Panc1 (cell line): ENCODE measurements at regions of chr5 and their contacts with region 1.

Region 1: GRCh38 chr5:172006321-172007174 is at the start of gene FBXW11:
- DNase-seq: peak; percentile 86
- ATAC-seq: peak; percentile 93
- H3K4me3 ChIP-seq: peak within 1 kb of the TSS; percentile 99 to 100
- H3K27ac ChIP-seq: peak within 1 kb of the TSS; percentile 99
- H3K4me1 ChIP-seq: peaks cover 52% of the 10 kb centered on the region
- H3K27me3 ChIP-seq: no peaks in the 10 kb centered on the region
- CTCF ChIP-seq: no peak
- total RNA-seq, gene FBXW11: 111 TPM

Region 2: GRCh38 chr5:171913987-171914273 is 92.6 kb before region 1 on chr5:
- CTCF ChIA-PET with region 1: interaction called, 21 read pairs
- POLR2A ChIA-PET with region 1: interaction called, 10 read pairs
- in situ Hi-C with region 1: no loop called
- intact Hi-C with region 1: loop called (anchors 5 kb)
- DNase-seq: no peak
- ATAC-seq: no peak
- H3K4me3 ChIP-seq: no peak overlapping the region
- H3K27ac ChIP-seq: peak overlapping the region; percentile 65
- H3K4me1 ChIP-seq: peaks cover 54% of the 10 kb centered on the region
- H3K27me3 ChIP-seq: no peaks in the 10 kb centered on the region
- CTCF ChIP-seq: no peak

Region 3: DNA sequence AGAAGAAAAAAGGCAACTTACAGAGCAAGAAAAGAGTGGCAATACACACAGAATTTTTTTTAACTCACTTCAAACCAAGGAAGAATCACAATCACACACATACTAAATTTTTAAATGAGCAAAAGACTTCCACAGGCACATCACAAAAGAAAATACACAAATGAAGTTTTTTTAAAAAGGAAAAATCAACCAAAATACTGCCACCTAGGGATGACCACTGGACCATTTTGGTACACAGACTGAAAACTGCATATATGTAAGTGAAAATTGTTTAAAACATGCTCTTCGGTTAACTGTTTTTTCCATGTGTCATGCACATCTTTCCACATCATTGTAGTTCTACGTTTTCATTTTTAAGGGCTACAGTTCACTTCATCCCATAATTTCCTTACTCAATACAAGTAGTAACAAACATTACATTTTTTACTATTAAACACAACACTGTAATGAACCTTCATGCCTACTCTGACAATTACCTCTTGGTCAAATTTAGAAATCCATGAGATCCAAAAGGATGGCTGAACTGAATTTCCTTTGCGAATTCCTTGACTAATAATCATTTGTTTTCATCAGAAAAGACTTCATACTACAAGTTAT is 79.1 kb before region 1 on chr5:
- CTCF ChIA-PET with region 1: no interaction called
- POLR2A ChIA-PET with region 1: interaction called, 6 read pairs
- in situ Hi-C with region 1: no loop called
- intact Hi-C with region 1: loop called (anchors 5 kb)
- DNase-seq: no peak
- ATAC-seq: no peak
- H3K4me3 ChIP-seq: no peak overlapping the region
- H3K27ac ChIP-seq: no peak overlapping the region; the same call in 1 of the 2 replicates
- H3K4me1 ChIP-seq: peaks cover 12% of the 10 kb centered on the region; the same call in 1 of the 2 replicates
- H3K27me3 ChIP-seq: no peaks in the 10 kb centered on the region
- CTCF ChIP-seq: peak; percentile 61; the same call in 1 of the 2 replicates

Region 4: GRCh38 chr5:171992815-171993214 is 13.7 kb before region 1 on chr5:
- CTCF ChIA-PET with region 1: interaction called, 10 read pairs
- POLR2A ChIA-PET with region 1: interaction called, 12 read pairs
- in situ Hi-C with region 1: no loop called
- intact Hi-C with region 1: no loop called
- DNase-seq: no peak
- ATAC-seq: no peak
- H3K4me3 ChIP-seq: no peak overlapping the region
- H3K27ac ChIP-seq: peak overlapping the region; percentile 60; the same call in 1 of the 2 replicates
- H3K4me1 ChIP-seq: peaks cover 42% of the 10 kb centered on the region
- H3K27me3 ChIP-seq: no peaks in the 10 kb centered on the region
- CTCF ChIP-seq: no peak

Region 5: GRCh38 chr5:172414531-172415361 is 408.2 kb after region 1 on chr5:
- CTCF ChIA-PET with region 1: no interaction called
- POLR2A ChIA-PET with region 1: interaction called, 13 read pairs
- in situ Hi-C with region 1: no loop called
- intact Hi-C with region 1: no loop called
- DNase-seq: no peak
- ATAC-seq: peak; percentile 32; the same call in 1 of the 2 replicates
- H3K4me3 ChIP-seq: no peak overlapping the region
- H3K27ac ChIP-seq: peak overlapping the region; percentile 18
- H3K4me1 ChIP-seq: peaks cover 4% of the 10 kb centered on the region; the same call in 1 of the 2 replicates
- H3K27me3 ChIP-seq: no peaks in the 10 kb centered on the region
- CTCF ChIP-seq: no peak